Common myeloid progenitor, CD34-positive (primary cell): ENCODE measurements at regions of chr11 and their contacts with region 1.

Region 1: GRCh38 chr11:125371431-125371935 is 124.6 kb downstream of the FEZ1 start:
- DNase-seq: no peak
- H3K4me3 ChIP-seq: no peak overlapping the region
- H3K27ac ChIP-seq: no peak overlapping the region
- H3K4me1 ChIP-seq: no peaks in the 10 kb centered on the region
- H3K27me3 ChIP-seq: peaks cover 4 to 71% (median 34%) of the 10 kb centered on the region in 5 experiments

Region 2: GRCh38 chr11:125345421-125346178 is 25.9 kb before region 1 on chr11:
- CTCF ChIA-PET with region 1: interaction called, 14 read pairs
- POLR2A ChIA-PET with region 1: no interaction called
- DNase-seq: peak; percentile 34 to 61 (median 49)
- H3K4me3 ChIP-seq: no peak overlapping the region
- H3K27ac ChIP-seq: no peak overlapping the region
- H3K4me1 ChIP-seq: no peaks in the 10 kb centered on the region
- H3K27me3 ChIP-seq: peaks cover 0 to 11% (median 5%) of the 10 kb centered on the region in 5 experiments